ENCODE measurements at regions of chr3 and their contacts with region 1.

Region 1: GRCh38 chr3:32733631-32734229 is 48.7 kb downstream of the CNOT10 start:
- DNase-seq: no peak
- H3K4me3 ChIP-seq: no peak overlapping the region
- H3K27ac ChIP-seq: no peak overlapping the region
- H3K4me1 ChIP-seq: no peaks in the 10 kb centered on the region
- H3K27me3 ChIP-seq: no peaks in the 10 kb centered on the region
- CTCF ChIP-seq: peak in 3 of 4 experiments; percentile 46 to 75 (median 59)
- POLR2A ChIP-seq: no peak

Region 2: GRCh38 chr3:32667122-32667521 is 66.6 kb before region 1 on chr3:
- intact Hi-C with region 1: no loop called
- DNase-seq: no peak
- H3K4me3 ChIP-seq: no peak overlapping the region
- H3K27ac ChIP-seq: no peak overlapping the region
- H3K4me1 ChIP-seq: no peaks in the 10 kb centered on the region
- H3K27me3 ChIP-seq: no peaks in the 10 kb centered on the region
- CTCF ChIP-seq: no peak
- POLR2A ChIP-seq: no peak

Region 3: GRCh38 chr3:32794487-32795308 is 61.0 kb after region 1 on chr3:
- intact Hi-C with region 1: no loop called
- DNase-seq: no peak
- H3K4me3 ChIP-seq: no peak overlapping the region
- H3K27ac ChIP-seq: no peak overlapping the region
- H3K4me1 ChIP-seq: no peaks in the 10 kb centered on the region
- H3K27me3 ChIP-seq: no peaks in the 10 kb centered on the region
- CTCF ChIP-seq: no peak
- POLR2A ChIP-seq: no peak

Region 4: GRCh38 chr3:32835961-32836360 is 102.2 kb after region 1 on chr3:
- intact Hi-C with region 1: no loop called
- DNase-seq: no peak
- H3K4me3 ChIP-seq: no peak overlapping the region
- H3K27ac ChIP-seq: no peak overlapping the region
- H3K4me1 ChIP-seq: no peaks in the 10 kb centered on the region
- H3K27me3 ChIP-seq: peaks cover 2% of the 10 kb centered on the region
- CTCF ChIP-seq: no peak
- POLR2A ChIP-seq: no peak

Region 5: DNA sequence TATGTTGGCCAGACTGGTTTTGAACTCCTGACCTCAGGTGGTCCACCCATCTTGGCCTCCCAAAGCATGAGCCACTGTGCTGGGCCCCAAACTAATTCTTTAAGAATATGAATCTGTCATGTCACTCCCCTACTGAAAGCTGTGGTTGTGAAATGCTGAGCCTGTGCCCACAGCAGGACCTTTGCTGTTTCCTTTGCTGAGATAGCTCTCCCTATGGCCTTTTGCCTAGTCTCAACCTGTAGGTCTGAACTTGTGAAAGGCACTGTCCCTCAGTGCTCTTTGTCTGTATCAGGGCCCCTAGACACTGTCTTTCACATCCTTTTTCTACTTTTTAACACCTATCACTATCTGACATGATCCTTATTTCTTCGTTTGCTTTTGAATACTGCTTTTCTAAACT is 155.0 kb after region 1 on chr3:
- intact Hi-C with region 1: no loop called
- DNase-seq: no peak
- H3K4me3 ChIP-seq: no peak overlapping the region
- H3K27ac ChIP-seq: no peak overlapping the region
- H3K4me1 ChIP-seq: no peaks in the 10 kb centered on the region
- H3K27me3 ChIP-seq: no peaks in the 10 kb centered on the region
- CTCF ChIP-seq: no peak
- POLR2A ChIP-seq: no peak

Region 6: DNA sequence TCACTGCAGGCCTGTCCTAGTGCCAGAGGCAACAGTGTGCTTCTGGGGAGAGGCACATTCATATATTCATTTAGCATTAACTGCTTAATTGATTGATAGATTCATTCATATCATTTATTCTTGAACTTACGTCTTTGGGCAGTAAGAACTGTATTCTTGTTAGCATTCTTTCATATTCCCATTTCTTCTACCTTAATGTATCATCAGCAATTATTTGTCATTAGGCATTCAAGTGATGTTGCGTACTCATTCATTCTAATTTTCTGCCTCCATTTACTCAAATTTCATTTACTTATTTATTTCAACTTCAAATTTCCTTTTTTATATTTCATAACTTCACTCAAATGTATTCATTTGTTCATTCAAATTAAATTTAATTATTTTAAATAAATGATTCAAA is 186.2 kb after region 1 on chr3:
- intact Hi-C with region 1: loop called (anchors 5 kb)
- DNase-seq: no peak
- H3K4me3 ChIP-seq: no peak overlapping the region
- H3K27ac ChIP-seq: no peak overlapping the region
- H3K4me1 ChIP-seq: no peaks in the 10 kb centered on the region
- H3K27me3 ChIP-seq: no peaks in the 10 kb centered on the region
- CTCF ChIP-seq: no peak
- POLR2A ChIP-seq: no peak

Region 7: DNA sequence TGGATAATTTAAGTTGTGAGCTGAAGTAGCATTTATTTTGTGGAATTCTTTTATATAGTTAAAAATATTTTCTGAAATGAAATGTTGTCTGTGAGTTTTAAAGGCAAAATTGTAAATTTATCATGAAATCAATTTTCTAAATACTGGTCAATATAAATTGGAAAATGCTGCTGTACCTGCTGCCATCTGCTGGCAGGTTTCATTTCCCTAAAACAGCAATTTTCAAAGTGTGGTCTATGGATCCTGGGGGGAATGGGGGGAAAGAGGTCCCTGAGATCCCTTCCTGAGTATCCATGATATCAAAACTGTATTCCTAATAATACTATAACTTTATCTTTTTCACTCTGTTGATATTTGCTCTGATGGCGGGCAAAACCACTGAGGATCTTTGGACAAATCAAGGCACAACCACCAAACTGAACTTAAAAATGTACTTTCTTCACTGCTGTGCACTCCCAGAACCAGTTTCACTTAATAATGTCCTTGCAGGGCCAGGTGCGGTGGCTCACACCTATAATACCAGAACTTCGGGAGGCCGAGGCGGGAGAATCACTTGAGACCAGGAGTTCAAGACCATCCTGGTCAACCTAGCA is 200.5 kb after region 1 on chr3:
- intact Hi-C with region 1: loop called (anchors 5 kb)
- DNase-seq: peak; percentile 11
- H3K4me3 ChIP-seq: no peak overlapping the region
- H3K27ac ChIP-seq: no peak overlapping the region
- H3K4me1 ChIP-seq: no peaks in the 10 kb centered on the region
- H3K27me3 ChIP-seq: no peaks in the 10 kb centered on the region
- CTCF ChIP-seq: peak; percentile 17 to 73 (median 63)
- POLR2A ChIP-seq: no peak

Measured in prostate gland (tissue), 2 donors.